ENCODE measurements at regions of chr6 and their contacts with region 1.

Region 1: GRCh38 chr6:52361945-52362442 is at the start of gene PAQR8:
- DNase-seq: peak; percentile 79
- H3K4me3 Mint-ChIP-seq: peak within 1 kb of the TSS; percentile 99
- H3K27ac Mint-ChIP-seq: peak within 1 kb of the TSS; percentile 89
- H3K4me1 Mint-ChIP-seq: peaks cover 25% of the 10 kb centered on the region
- H3K27me3 Mint-ChIP-seq: no peaks in the 10 kb centered on the region
- total RNA-seq, gene PAQR8: 6.8 and 8.8 TPM in 2 replicates

Region 2: GRCh38 chr6:52276130-52276529 is 85.9 kb before region 1 on chr6:
- intact Hi-C with region 1: no loop called
- DNase-seq: no peak
- H3K4me3 Mint-ChIP-seq: no peak overlapping the region
- H3K27ac Mint-ChIP-seq: no peak overlapping the region
- H3K4me1 Mint-ChIP-seq: peaks cover 18% of the 10 kb centered on the region
- H3K27me3 Mint-ChIP-seq: no peaks in the 10 kb centered on the region

Region 3: GRCh38 chr6:52293067-52293466 is 68.9 kb before region 1 on chr6:
- intact Hi-C with region 1: no loop called
- DNase-seq: no peak
- H3K4me3 Mint-ChIP-seq: no peak overlapping the region
- H3K27ac Mint-ChIP-seq: no peak overlapping the region
- H3K4me1 Mint-ChIP-seq: peaks cover 17% of the 10 kb centered on the region
- H3K27me3 Mint-ChIP-seq: no peaks in the 10 kb centered on the region

Region 4: GRCh38 chr6:52304983-52305390 is 57.0 kb before region 1 on chr6:
- intact Hi-C with region 1: loop called (anchors 5 kb)
- DNase-seq: no peak
- H3K4me3 Mint-ChIP-seq: no peak overlapping the region
- H3K27ac Mint-ChIP-seq: peak overlapping the region; percentile 70
- H3K4me1 Mint-ChIP-seq: peaks cover 52% of the 10 kb centered on the region
- H3K27me3 Mint-ChIP-seq: no peaks in the 10 kb centered on the region

Region 5: DNA sequence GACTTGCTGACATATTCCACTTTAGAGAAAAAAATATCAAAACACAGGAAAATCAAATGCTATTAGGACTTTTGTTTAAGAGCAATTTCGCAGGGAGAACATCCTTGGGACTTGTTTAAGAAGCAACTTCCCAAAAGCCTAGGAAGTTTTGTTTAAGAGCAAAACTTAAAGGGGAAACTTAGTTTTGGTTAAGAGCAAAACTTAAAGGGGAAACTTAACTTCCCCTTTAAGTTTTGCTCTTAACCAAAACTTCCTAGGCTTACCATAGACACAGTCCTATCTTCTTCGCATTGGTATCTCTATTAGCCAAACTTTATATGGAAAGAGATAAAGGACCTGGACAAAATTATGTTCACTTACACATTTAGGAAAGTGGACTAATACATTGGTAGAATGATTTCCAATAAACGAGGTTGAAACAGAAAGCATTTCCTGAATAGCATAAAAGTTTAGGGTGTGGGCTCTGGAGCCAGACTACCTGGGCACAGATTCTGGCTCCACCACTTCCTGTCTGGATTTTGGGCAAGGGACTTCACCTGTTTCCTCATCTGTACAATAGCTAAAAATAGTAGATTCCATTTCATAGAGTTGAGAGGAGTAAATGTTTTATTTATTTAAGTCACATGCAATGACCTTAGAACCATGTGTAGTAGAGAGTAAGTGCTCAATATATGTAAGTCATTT is 15.7 kb after region 1 on chr6:
- intact Hi-C with region 1: loop called (anchors 2 kb)
- DNase-seq: no peak
- H3K4me3 Mint-ChIP-seq: no peak overlapping the region
- H3K27ac Mint-ChIP-seq: no peak overlapping the region
- H3K4me1 Mint-ChIP-seq: peaks cover 48% of the 10 kb centered on the region
- H3K27me3 Mint-ChIP-seq: no peaks in the 10 kb centered on the region

Region 6: GRCh38 chr6:52399511-52400312 is 37.7 kb after region 1 on chr6:
- intact Hi-C with region 1: loop called (anchors 2 kb)
- DNase-seq: no peak
- H3K4me3 Mint-ChIP-seq: no peak overlapping the region
- H3K27ac Mint-ChIP-seq: peak overlapping the region; percentile 44
- H3K4me1 Mint-ChIP-seq: peaks cover 47% of the 10 kb centered on the region
- H3K27me3 Mint-ChIP-seq: no peaks in the 10 kb centered on the region

Region 7: GRCh38 chr6:52617087-52617486 is 255.1 kb after region 1 on chr6:
- intact Hi-C with region 1: no loop called
- DNase-seq: no peak
- H3K4me3 Mint-ChIP-seq: no peak overlapping the region
- H3K27ac Mint-ChIP-seq: no peak overlapping the region
- H3K4me1 Mint-ChIP-seq: no peaks in the 10 kb centered on the region
- H3K27me3 Mint-ChIP-seq: peaks cover 10% of the 10 kb centered on the region

Measured in activated T-helper 2 cell treated with anti-CD3 and anti-CD28 coated beads, Interferon-gamma antibody, Interleukin-2, Interleukin-4, amounts not matched to agents 10 μg/mL and 5 μg/mL and 100 μg/mL, durations not matched to agents 14 hours and 24 hours and 36 hours (primary cell).